ENCODE measurements at regions of chr2 and their contacts with region 1.

Region 1: DNA sequence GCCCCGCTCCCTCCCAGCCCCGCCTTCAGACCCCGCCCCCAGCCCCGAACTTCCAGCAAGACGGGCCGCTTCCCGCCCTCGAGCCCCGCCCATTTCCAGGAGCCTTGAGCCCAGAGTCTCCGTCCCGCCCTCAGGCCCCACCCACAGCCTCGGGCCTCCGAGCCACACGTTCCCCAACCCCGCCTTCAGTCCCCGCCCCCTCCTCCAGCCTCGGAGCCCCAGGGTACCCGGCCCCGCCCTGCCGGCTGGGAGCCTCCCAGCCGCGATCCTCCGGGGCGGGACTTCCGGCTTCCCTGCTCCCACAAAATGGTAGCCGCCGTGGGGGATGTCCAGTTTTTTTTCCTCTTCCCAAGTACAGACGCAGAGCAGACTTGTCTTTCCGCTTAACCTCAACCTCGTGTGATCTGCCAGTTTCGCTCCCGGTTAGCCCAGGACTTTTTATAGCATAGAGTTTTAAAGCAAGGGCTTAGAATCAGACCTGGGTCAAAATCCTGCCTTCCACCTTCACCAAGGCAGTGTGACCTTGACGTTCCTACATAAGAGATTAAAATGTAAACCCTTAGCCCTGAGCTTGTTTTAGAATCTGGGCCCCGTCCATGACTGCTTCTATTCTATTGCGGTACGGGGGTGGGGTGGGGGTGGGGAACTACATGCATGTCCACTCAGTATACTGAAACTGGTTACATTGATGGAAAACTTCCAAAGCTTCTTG is 435 bp upstream of the GPR155 start:
- DNase-seq: peak; percentile 94 to 99 (median 98)

Region 2: DNA sequence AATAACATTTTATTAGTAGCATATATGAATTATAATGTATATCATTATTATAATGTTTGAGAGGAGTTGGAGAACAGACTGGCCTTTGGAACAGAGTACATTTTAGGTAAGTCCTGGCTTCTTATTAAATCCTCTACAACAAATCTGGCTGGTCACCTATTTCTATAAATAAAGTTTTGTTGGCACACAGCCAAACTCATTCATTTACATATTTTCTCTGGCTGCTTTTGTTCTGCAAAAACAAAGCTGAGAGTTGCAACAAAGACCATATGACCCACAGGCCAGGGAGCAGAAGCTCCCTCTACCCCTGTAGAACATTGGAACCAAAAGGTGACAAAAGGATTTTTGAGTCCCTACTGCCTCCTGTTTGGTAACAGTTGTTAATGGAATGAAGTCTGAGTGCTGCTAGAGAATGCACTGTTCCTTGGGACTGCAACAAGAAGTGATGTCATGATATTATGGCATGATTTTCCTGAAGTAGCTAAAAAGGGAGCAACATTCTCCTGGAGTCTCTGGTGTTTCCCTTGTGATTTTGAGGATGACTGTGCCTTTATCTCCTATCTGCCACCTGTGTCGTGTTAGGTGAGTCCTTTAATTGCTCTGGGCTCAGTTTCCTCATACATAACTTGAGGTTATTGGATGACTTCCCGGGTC is 174.6 kb before region 1 on chr2:
- intact Hi-C with region 1: no loop called
- DNase-seq: no peak

Region 3: DNA sequence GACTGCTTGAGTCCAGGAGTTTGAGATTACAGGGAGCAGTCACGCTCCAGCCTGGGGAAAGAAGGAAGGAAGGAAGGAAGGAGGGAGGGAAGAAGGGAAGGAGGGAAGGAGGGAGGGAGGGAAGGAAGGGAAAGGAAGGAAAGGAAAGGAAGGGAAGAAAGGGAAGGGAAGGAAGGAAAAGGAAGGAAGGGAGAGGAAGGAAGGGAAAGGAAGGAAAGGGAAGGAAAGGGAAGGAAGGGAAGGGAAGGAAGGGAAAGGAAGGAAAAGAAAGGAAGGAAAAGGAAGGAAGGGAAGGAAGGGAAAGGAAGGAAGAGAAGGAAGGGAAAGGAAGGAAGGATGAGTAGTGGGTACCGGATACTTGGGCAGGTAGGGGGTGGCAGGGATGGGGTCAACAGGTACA is 32.7 kb before region 1 on chr2:
- intact Hi-C with region 1: no loop called
- DNase-seq: no peak

Region 4: DNA sequence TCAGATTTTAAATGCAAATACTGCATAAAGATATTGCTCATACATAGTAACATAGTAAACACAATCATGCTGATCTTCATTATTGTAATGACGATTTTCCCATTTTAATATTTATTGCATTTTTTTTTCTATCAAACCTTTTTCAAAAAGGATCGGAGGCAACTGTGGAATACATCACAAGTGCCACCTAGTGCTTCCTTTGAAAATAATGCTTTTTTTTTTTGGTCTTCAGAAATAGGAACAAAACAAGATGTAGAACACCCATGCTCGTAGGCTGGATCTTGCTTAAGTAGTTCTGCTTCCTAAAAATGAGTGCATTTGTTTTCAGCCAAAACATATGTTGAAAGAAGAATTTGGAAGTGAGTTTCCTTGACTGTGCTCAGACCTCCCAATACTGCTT is 35.3 kb after region 1 on chr2:
- intact Hi-C with region 1: loop called (anchors 2 kb)
- DNase-seq: no peak

Region 5: GRCh38 chr2:174561283-174561971 is 74.2 kb after region 1 on chr2:
- intact Hi-C with region 1: loop called (anchors 2 kb)
- DNase-seq: peak; percentile 68 to 97 (median 80)

Region 6: DNA sequence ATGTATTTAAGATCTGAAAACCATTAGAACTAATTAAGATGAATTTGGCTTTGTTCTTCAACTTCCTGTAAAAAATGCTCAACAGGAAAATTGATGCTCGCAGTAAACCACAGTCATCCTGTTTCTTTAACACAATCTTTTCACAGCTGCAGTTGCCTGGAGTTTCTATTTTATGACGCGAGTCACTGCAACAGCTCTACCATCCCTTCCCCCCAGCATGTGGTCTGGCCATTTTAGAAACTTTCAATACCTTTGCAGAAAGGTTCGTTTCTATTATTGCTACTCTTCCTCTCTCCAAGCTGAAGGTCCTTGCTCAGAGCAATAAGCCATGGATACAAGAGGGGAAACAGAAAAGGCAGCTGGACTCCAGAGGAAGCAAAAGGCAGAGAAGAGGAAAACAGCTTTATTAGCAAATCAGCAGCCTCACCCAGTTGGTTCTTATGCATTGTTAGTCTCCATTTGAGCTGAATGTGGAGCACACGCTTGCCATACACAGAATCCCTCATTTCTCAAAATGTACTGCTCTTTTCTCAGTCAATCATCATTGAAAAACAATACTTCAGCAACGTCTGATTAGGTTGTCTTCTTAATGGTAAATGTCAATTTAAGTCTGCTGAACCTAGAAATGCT is 106.4 kb after region 1 on chr2:
- intact Hi-C with region 1: no loop called
- DNase-seq: no peak

Region 7: DNA sequence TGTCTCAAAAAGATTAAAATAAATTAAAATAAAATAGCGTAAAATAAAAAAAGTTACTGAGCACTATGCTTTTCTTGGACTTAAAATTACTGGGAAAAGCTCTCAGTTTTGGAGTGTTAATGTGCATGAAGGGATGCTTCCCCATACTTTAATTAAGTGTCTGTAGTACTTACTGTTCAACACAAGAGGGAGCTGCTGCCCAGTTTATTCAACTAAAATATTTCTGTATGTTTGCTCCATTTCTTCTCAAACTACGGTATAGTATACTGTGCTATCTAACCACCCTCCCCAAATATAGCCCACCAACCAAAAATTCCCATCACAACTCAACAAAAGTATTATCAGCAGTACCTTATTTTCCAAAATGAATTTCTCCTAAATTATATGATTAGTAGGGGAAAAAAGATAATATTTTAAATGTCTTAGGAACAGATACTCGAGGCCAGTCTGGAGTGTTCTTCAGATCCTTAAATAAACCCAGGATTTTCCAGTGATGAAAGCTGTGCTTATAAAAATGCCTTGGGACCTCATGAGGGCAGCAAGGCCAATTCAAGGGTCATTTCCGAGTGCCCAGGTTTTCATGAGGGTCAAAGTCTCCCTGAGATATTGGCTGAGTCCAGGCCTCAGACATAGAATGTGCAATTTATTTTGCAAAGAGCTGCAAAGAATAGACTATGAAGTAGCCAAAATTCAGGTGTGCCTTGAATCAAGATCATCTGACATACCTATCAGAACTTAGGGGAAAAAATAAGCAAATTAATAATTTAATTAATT is 212.9 kb after region 1 on chr2:
- intact Hi-C with region 1: no loop called
- DNase-seq: no peak